Endothelial cell of umbilical vein (primary cell): ENCODE measurements at regions of chr10 and their contacts with region 1.

Region 1: DNA sequence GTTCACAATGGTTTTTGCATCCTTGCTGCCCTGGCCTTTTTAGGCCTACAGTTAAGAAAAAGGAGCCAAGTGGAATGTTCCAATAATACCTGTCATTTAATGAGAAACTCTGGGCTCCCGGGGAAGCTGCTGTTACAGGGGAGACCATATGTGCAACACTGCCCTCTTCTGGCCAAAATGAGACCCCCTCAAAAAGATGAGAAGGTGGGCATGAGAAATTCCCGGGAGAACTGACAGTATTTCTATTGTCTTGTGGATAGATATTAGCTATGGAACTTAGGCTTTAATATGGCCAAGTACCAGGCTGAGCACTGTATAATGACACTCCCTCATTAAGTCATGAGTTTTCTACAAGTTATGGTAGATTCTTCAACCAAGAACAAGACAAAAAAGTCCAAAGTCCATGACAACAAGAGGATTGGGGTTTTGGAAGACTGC is 99.4 kb downstream of the CCDC3 start:
- DNase-seq: peak; percentile 66
- H3K4me3 ChIP-seq: no peak overlapping the region
- H3K27ac ChIP-seq: no peak overlapping the region
- H3K4me1 ChIP-seq: peaks cover 5% of the 10 kb centered on the region
- H3K27me3 ChIP-seq: peaks cover 0 to 2% of the 10 kb centered on the region in 2 experiments
- CTCF ChIP-seq: peak; percentile 72 to 75
- POLR2A ChIP-seq: no peak

Region 2: GRCh38 chr10:12235796-12236195 is 666.4 kb before region 1 on chr10:
- CTCF ChIA-PET with region 1: no interaction called
- POLR2A ChIA-PET with region 1: no interaction called
- dilution Hi-C with region 1: no loop called
- intact Hi-C with region 1: no loop called
- DNase-seq: peak; percentile 33
- H3K4me3 ChIP-seq: no peak overlapping the region
- H3K27ac ChIP-seq: peak overlapping the region; percentile 52
- H3K4me1 ChIP-seq: peaks cover 6% of the 10 kb centered on the region
- H3K27me3 ChIP-seq: no peaks in the 10 kb centered on the region
- CTCF ChIP-seq: no peak
- POLR2A ChIP-seq: no peak

Region 3: GRCh38 chr10:12264204-12264940 is 637.8 kb before region 1 on chr10:
- CTCF ChIA-PET with region 1: interaction called, 18 read pairs
- POLR2A ChIA-PET with region 1: no interaction called
- dilution Hi-C with region 1: no loop called
- intact Hi-C with region 1: loop called (anchors 1 kb)
- DNase-seq: peak; percentile 73
- H3K4me3 ChIP-seq: peak overlapping the region in 2 of 3 experiments; percentile 13 to 29
- H3K27ac ChIP-seq: no peak overlapping the region
- H3K4me1 ChIP-seq: no peaks in the 10 kb centered on the region
- H3K27me3 ChIP-seq: no peaks in the 10 kb centered on the region
- CTCF ChIP-seq: peak; percentile 70 to 82
- POLR2A ChIP-seq: no peak

Region 4: DNA sequence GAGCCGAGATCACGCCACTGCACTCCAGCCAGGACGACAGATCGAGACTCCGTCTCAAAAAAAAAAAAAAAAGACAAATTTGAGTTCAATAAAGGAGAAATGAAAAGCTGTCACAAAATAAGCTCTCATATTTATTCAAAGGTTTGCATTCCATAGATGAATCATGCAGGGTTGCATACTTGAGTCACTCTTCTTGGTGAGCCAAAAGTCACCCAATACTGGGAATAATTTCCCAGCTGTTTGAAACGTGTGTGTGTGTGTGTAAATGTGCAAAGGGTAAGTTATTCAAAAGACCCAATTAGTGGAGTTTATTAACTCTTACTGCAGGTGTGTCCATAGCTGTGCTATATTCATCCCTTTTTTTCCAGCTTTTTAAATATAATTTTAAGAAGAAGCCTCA is 198.3 kb before region 1 on chr10:
- CTCF ChIA-PET with region 1: interaction called, 120 read pairs
- POLR2A ChIA-PET with region 1: no interaction called
- dilution Hi-C with region 1: no loop called
- intact Hi-C with region 1: loop called (anchors 1 kb)
- DNase-seq: peak; percentile 72
- H3K4me3 ChIP-seq: no peak overlapping the region
- H3K27ac ChIP-seq: peak overlapping the region; percentile 28
- H3K4me1 ChIP-seq: peaks cover 52% of the 10 kb centered on the region
- H3K27me3 ChIP-seq: no peaks in the 10 kb centered on the region
- CTCF ChIP-seq: no peak
- POLR2A ChIP-seq: no peak

Region 5: DNA sequence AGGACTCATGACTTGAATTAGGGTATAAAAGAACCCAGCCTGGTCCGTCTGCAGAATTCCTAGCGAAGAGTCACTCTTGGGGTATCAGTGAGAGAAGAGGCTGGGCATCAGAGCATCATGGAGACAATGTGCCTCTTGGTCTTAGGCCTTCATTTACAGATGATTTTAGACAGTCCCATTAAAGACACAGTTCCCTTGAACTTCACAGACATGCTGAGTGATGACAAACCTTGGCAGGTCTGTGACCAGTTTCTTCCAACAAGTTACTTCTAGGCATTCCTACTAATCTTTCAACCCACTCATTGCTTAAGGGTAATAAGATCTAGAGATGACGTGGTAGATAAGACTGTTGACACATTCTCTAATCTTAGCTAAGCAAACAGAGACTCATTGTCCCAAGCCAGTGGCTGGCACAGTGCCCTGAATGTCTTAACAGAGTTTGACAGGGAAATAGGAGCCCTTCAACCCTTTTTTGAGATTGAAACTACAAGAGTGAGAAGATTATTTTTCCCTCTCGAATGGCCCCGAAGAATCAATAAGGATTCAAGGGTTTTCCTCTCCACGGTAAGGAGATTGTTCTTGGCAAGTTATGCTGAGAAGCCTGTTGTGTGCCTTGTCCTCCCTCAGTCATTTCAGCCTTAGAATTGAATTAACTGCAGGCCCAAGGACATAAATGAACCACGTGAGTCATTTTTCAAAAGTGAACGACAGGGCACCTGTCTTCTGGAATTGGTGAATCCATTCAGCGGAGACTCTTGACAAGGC is 181.8 kb before region 1 on chr10:
- CTCF ChIA-PET with region 1: interaction called, 13 read pairs
- POLR2A ChIA-PET with region 1: no interaction called
- dilution Hi-C with region 1: no loop called
- intact Hi-C with region 1: loop called (anchors 5 kb)
- DNase-seq: peak; percentile 96
- H3K4me3 ChIP-seq: no peak overlapping the region
- H3K27ac ChIP-seq: peak overlapping the region; percentile 65
- H3K4me1 ChIP-seq: peaks cover 23% of the 10 kb centered on the region
- H3K27me3 ChIP-seq: no peaks in the 10 kb centered on the region
- CTCF ChIP-seq: no peak
- POLR2A ChIP-seq: peak; percentile 37

Region 6: DNA sequence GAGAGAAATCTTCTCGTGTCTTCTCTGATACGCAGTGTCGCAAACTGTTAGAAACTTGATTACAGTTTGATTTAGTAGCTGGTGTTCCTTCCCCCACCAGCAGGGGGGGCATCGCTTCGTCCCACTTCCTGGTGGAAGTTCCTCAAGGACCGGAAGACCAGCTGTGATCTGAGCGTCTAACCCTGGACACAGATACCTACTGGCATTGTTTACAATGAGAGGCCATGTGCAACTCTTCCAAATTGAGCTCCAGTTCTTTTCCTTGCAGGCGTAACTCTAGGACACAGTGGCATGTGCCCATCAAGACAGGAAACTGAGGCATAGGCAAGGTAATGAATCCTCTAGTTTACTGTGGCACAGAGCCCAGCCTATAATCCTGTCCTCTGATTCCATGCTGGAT is 119.6 kb before region 1 on chr10:
- CTCF ChIA-PET with region 1: interaction called, 237 read pairs
- POLR2A ChIA-PET with region 1: no interaction called
- dilution Hi-C with region 1: no loop called
- intact Hi-C with region 1: loop called (anchors 1 kb)
- DNase-seq: peak; percentile 58
- H3K4me3 ChIP-seq: no peak overlapping the region
- H3K27ac ChIP-seq: no peak overlapping the region
- H3K4me1 ChIP-seq: peaks cover 3% of the 10 kb centered on the region
- H3K27me3 ChIP-seq: peaks cover 0 to 2% of the 10 kb centered on the region in 2 experiments
- CTCF ChIP-seq: peak; percentile 82 to 88
- POLR2A ChIP-seq: no peak

Region 7: DNA sequence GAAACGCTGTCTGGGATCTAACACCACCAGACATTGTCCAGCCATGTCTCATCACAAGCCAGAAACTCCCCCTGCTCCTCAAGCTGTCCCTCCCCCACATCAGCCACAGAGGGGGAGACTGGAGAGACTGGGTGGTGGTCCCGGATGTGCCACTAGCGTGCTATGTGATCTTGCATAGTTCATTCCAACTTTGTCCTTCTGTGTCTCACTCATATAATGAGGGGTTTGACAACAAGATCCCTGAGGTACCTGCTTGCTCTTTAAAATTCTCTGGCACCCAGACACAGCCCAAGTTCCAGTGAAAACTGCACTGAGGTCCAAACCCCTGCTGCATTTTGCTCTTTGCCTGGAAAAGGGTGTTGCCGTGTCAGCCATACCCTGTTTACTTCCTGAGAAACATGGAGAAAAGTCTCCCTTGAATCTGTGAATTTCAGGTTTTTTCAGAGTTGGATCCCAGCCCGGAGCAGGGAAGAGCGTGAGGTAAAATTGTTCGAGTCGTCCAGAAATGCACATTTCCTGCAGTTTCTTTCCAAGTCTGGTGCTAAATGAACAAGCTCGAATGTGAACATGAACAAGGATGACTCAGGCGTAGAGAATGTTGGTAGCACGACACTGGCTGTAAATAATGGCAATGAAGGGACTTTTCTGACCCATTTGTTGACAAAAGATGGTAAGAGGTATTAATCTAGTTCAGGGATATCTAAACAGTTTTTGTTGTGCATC is 57.2 kb before region 1 on chr10:
- CTCF ChIA-PET with region 1: interaction called, 20 read pairs
- POLR2A ChIA-PET with region 1: no interaction called
- dilution Hi-C with region 1: no loop called
- intact Hi-C with region 1: loop called (anchors 2 kb)
- DNase-seq: peak; percentile 98
- H3K4me3 ChIP-seq: peak overlapping the region in 1 of 3 experiments; percentile 12
- H3K27ac ChIP-seq: peak overlapping the region; percentile 96
- H3K4me1 ChIP-seq: peaks cover 31% of the 10 kb centered on the region
- H3K27me3 ChIP-seq: no peaks in the 10 kb centered on the region
- CTCF ChIP-seq: no peak
- POLR2A ChIP-seq: peak; percentile 56

Region 8: GRCh38 chr10:13056456-13057077 is 154.4 kb after region 1 on chr10:
- CTCF ChIA-PET with region 1: interaction called, 4 read pairs
- POLR2A ChIA-PET with region 1: no interaction called
- dilution Hi-C with region 1: no loop called
- intact Hi-C with region 1: loop called (anchors 5 kb)
- DNase-seq: peak; percentile 22
- H3K4me3 ChIP-seq: no peak overlapping the region
- H3K27ac ChIP-seq: no peak overlapping the region
- H3K4me1 ChIP-seq: no peaks in the 10 kb centered on the region
- H3K27me3 ChIP-seq: no peaks in the 10 kb centered on the region
- CTCF ChIP-seq: peak; percentile 15 to 38
- POLR2A ChIP-seq: no peak